AG04450 (cell line): ENCODE measurements at regions of chr6 and their contacts with region 1.

Region 1: DNA sequence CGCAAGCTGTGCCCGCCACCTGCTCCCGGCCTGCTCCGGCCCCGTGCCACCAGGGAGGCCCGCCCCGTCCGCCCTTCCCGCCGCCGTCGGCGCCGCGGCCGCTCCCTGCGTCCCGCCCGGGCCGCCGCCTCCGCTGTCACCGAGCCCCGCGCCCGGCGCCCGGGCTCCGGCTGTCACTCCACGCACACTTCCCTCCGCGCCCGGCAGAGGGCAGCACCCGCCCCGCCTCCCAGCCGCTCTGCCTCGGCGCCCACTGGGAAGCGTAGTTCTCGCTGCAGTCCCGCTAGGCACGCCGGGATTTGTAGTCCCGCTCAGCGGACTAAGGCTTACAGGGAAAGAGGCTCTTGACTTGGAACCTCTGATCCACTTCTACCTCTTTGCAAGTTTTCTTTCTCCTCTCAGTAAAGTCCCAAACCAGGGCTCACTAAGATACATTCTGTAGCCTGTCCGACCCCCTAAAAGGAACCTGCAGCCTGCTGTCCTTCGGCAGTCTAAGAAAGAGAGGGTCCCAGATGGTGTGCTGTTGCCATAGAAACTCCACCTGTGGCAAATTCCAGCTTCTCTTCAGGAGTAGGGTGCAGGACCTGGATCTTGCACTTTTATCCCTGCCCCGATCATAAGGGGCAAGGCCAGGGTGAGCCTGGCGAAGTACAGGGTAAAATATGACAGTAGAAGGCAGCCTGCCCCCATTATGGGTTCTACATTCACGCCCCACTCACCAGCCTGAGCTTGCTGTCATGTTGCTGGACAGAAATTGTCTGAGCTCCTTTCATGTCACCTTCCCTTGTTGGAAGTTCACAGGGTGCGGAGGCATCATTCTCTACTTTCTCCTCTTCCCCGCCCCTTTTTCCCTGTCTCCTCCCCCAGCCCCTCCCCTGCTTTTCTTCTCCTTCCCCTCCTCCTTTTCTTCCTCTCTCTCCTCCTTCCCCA is at the start of gene TFEB:
- DNase-seq: peak; percentile 70
- H3K4me3 ChIP-seq: peak within 1 kb of the TSS; percentile 72
- H3K27ac ChIP-seq: no peak within 1 kb of the TSS
- H3K27me3 ChIP-seq: peaks cover 3% of the 10 kb centered on the region
- CTCF ChIP-seq: peak; percentile 72
- polyA plus RNA-seq, gene TFEB: 3.9 and 4.3 TPM in 2 replicates

Region 2: DNA sequence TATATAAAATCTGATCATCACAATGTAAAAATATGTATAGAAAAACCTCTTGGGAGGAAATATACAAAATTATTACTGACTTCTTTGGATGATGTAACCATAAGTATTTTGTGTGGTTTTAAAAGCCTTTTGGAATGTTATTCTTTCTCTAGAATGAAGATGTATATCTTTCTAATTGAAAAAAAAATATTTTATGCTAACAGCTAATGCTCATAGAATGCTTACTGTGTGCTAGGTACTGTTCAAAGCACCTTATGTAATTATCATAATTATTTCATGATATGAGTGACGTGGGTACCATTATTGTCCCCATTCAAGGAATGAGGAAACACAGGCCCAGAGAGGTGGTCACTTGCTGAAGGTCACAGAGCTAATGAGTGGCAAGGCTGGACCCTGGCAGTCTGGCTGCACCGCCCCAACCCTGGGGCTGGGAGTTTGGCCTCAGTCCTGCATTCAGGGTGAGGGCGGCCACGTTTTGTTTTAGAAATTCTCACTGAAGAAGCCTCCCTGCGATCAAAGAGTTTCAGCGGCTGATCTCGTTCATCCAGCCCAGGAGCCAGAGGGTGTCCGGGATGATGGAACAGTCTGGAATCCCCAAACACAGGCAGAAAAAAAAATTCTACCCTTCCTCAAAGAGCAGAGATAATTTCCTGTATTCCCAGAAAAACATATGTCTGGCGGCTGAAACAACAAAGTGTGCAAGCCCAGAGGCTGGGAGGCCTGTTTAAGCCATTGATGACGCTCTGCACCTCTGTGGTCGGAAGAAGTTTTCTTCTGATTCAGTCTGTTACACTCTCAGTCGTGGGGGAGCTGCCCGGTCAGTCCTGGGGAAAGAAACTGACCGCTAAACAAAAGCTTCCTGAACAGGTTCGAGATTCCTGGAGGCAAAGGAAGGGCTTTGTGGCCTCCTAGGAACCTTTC is 37.6 kb before region 1 on chr6:
- CTCF ChIA-PET with region 1: interaction called, 5 read pairs
- POLR2A ChIA-PET with region 1: interaction called, 10 read pairs
- DNase-seq: peak; percentile 89
- H3K4me3 ChIP-seq: peak overlapping the region; percentile 18
- H3K27ac ChIP-seq: peak overlapping the region; percentile 99
- H3K27me3 ChIP-seq: no peaks in the 10 kb centered on the region
- CTCF ChIP-seq: no peak

Region 3: DNA sequence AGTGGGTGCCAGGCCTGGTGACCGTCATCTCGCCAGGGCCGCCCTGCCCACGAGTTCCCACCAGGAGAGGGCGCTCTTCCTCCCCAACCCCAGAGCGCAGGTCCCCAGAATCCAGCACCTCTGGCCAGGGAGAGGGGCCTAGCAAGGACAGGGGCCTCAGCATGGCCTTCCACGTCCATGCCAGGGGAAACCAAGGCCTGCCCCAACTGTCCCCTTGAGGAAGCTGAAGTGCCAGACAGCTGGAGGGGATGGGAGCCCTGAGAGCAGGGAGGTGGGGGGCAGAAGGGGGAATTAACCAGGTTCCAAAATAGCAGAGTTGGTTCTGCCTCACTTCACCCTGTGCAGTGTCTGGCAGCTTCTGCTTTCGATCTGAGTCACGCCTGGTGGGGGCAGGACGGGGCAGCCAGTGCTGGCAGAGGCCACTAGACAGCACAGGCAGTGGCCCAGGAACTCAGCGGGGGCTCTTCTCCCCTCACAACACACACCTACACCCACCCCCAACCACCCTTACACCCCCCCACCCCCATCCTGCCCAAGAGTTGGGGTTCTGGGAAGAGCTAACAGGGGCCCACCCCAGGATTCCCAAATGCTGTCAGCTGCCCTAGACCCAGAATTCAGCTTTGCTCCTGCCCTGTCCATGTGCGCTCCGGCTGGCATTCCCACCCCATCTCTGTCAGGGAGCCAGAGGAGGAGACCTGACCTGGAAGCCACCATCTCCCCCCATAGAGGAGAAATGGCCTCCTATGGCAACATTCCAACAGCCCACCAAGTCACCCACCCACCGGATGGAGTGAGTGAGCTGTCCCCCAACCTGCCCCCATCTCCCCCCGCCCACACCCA is 29.5 kb before region 1 on chr6:
- CTCF ChIA-PET with region 1: interaction called, 19 read pairs
- POLR2A ChIA-PET with region 1: interaction called, 21 read pairs
- DNase-seq: no peak
- H3K4me3 ChIP-seq: no peak overlapping the region
- H3K27ac ChIP-seq: peak overlapping the region; percentile 47
- H3K27me3 ChIP-seq: no peaks in the 10 kb centered on the region
- CTCF ChIP-seq: peak; percentile 71

Region 4: GRCh38 chr6:41723530-41724227 is 12.0 kb before region 1 on chr6:
- CTCF ChIA-PET with region 1: interaction called, 4 read pairs
- POLR2A ChIA-PET with region 1: interaction called, 13 read pairs
- DNase-seq: peak; percentile 65
- H3K4me3 ChIP-seq: peak overlapping the region; percentile 40
- H3K27ac ChIP-seq: peak overlapping the region; percentile 87
- H3K27me3 ChIP-seq: no peaks in the 10 kb centered on the region
- CTCF ChIP-seq: no peak

Region 5: DNA sequence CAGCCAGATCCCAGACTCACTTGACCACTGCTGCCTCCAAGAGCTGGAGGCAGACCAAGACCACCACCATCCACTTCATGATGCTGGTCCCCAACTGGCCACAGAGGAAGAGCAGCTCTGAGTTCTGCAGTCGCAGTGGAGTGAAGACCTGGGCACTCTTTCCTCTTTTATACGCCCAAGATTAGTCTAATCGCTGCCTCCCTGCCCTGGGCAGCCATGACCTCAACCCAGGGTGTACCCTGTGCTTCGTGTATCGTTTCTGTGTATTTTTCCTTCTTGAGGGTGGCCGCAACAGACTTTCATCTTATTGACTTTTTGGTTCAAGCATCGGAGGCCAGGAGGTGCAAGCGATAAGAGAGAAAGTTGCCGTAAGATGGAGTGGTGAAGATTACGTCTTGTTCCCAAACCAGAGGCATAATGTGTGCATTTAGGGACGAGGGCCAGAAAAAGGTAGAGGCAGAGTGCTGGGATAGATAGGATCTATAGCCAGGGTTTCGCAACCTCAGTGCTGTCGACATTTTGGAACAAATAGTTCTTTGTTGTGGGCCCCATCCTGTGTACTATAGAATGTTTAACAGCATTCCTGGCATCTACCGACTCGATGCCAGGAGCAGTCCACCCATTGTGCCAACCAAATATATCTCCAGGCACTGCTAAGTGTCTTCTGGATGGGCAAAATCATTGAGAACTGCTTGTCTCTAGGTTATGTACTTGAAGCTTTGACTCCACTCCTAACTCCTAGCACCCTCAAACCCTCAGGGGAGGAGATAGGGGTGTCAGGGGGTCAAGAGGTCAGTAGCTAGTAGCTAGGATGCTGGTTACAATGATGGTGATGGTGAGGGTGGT is 11.8 kb after region 1 on chr6 and contains the start of gene PGC:
- CTCF ChIA-PET with region 1: interaction called, 15 read pairs
- POLR2A ChIA-PET with region 1: no interaction called
- DNase-seq: no peak
- H3K4me3 ChIP-seq: no peak within 1 kb of the TSS
- H3K27ac ChIP-seq: no peak within 1 kb of the TSS
- H3K27me3 ChIP-seq: peaks cover 22% of the 10 kb centered on the region
- CTCF ChIP-seq: no peak
- polyA plus RNA-seq, gene PGC: not detected in 2 replicates

Region 6: DNA sequence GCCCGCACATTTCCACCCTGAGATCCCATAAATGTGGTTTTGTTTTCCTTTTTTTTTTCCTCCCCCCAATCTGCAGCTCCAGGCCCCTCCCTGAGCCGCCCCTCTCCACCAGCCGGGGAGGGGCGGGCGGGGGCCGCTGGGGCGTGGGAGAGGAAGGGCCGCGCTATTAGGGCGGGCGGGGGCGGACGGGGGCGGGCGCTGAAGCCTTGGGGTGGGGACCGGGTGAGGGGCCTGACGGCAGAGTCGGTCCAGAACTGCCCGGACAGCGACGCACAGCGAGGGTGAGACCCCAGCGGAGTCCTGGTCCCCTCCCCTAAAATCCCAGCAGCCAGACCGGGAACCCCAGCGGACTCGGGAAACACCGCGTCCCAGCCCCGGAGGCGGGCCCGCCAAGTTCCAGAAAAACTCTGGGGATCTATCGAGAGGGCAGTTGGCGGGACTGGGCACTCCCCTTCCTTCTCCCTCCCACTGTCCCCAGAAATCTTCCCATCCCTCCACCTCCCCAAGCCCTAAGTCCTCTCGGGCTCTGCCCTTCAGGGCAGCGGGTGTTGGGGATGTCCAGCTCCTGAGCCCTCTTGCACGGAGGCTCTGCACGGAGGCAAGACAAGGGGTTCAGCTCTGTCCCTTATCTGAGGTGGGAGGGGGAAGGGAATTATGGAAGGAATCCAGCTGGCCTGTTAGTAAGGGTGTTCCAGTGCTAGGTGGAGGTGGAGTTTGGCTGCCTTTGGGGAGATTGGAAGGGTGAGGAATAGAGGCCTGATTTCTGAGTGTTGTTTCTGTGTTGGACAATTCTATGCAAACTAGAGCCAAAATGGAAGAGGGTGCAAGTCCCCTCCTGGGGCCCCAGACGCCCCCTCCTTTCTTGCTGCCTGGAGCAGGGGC is 45.1 kb after region 1 on chr6 and contains the start of gene PRICKLE4:
- CTCF ChIA-PET with region 1: interaction called, 10 read pairs
- POLR2A ChIA-PET with region 1: interaction called, 3 read pairs
- DNase-seq: no peak
- H3K4me3 ChIP-seq: peak within 1 kb of the TSS; percentile 78
- H3K27ac ChIP-seq: no peak within 1 kb of the TSS
- H3K27me3 ChIP-seq: no peaks in the 10 kb centered on the region
- CTCF ChIP-seq: no peak
- polyA plus RNA-seq, gene PRICKLE4: 0.12 TPM in 1 of 2 replicates, not detected in the other